Pancreas (tissue), 10 donors: ENCODE measurements at regions of chr12 and their contacts with region 1.

Region 1: DNA sequence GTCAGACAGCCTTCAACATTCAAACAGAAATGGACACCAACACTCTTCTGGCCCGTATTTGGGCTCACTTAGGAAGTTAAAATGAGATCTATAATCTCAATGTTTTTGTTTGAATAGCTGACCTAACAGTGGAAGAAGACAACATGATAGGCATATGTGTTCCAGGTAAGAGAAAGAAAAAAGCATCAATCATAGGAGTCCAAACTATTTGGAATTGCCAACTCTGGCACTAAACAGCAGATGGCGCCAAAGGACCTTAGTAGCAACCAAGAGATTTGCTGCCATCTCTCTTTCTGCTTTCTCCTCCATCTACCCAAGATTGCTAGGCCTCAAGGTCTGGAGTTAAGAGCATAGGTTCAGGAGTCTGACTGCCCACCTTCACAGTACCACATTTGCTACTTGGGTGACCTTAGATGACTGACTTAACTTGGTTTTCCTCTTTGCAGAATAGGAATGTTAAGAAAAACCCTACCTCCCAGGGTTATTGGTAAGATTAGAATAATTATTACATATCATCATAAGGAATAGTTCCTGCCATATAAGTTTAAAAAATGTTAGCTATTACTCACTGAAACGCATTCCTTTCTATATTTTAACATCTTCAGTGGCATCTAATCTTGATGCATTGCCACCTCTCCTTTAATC is 30.2 kb downstream of the PEX5 start:
- DNase-seq: peak in 5 of 6 donors; percentile 50 to 74 (median 61)
- ATAC-seq: peak; percentile 58 to 90 (median 84)
- H3K4me3 ChIP-seq: no peak overlapping the region
- H3K27ac ChIP-seq: no peak overlapping the region
- H3K4me1 ChIP-seq: no peaks in the 10 kb centered on the region
- H3K27me3 ChIP-seq: no peaks in the 10 kb centered on the region
- CTCF ChIP-seq: peak; percentile 56 to 81 (median 72)

Region 2: DNA sequence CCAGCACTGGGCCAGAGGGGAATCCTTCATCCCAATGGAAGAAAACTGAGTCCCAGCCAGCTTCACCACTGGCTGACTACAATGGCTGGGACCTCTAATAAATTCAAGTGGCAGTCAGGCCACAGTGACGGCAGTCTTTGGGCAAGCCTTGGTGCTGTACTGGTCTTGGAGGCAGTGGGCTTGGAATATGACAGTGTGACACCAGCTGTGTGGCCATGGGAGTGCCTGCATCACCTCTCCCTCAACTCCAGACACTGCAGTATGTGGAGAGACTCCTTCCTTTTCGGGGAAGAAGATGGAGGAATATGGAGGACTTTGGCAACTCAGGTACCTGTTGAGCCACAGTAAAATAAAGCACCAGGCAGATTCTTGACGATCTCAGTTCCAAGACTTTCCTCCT is 240.3 kb after region 1 on chr12:
- intact Hi-C with region 1: loop called in 1 of 3 experiments (anchors 5 kb)
- DNase-seq: no peak
- ATAC-seq: no peak
- H3K4me3 ChIP-seq: no peak overlapping the region
- H3K27ac ChIP-seq: no peak overlapping the region
- H3K4me1 ChIP-seq: no peaks in the 10 kb centered on the region
- H3K27me3 ChIP-seq: no peaks in the 10 kb centered on the region
- CTCF ChIP-seq: no peak

Region 3: DNA sequence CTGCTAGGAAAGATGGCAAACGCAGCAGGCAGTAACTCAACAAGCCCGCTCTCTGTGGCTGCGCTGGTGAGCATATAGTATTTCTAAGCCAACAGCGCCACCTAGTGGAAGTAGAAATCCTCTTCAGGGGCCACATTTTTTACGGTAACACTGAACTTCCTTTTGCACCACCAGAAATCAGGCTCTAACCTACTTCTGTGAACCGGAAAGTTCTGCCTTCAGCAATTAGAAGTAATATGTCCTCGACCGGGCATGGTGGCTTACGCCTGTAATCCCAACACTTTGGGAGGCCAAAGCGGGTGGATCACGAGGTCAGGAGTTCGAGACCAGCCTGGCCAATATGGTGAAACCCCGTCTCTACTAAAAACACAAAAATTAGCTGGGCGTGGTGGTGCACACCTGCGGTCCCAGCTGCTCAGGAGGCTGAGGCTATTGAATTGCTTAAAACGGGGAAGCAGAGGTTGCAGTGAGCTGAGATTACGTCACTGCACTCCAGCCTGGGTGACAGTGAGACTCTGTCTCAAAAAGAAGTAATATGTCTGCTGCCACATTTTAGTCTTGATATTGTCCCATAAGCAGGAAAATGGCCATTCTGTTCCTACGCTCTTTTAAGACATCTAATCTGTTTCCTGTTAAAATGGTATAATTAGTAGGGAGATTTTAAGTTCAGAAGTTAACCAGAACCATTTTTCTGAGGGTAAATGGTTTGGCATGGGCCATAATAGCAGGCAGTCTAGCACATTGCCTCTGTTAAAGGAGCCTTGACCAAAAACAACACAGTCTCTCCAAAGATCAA is 419.2 kb after region 1 on chr12:
- intact Hi-C with region 1: loop called in 2 of 3 experiments (anchors 5 to 10 kb)
- DNase-seq: peak; percentile 64 to 81 (median 74)
- ATAC-seq: peak; percentile 94 to 98 (median 96)
- H3K4me3 ChIP-seq: peak overlapping the region in 3 of 4 donors; percentile 7 to 43 (median 39)
- H3K27ac ChIP-seq: peak overlapping the region in 3 of 4 donors; percentile 24 to 54 (median 44)
- H3K4me1 ChIP-seq: no peaks in the 10 kb centered on the region
- H3K27me3 ChIP-seq: no peaks in the 10 kb centered on the region
- CTCF ChIP-seq: peak; percentile 78 to 94 (median 86)